ENCODE measurements at regions of chr5 and their contacts with region 1.

Region 1: DNA sequence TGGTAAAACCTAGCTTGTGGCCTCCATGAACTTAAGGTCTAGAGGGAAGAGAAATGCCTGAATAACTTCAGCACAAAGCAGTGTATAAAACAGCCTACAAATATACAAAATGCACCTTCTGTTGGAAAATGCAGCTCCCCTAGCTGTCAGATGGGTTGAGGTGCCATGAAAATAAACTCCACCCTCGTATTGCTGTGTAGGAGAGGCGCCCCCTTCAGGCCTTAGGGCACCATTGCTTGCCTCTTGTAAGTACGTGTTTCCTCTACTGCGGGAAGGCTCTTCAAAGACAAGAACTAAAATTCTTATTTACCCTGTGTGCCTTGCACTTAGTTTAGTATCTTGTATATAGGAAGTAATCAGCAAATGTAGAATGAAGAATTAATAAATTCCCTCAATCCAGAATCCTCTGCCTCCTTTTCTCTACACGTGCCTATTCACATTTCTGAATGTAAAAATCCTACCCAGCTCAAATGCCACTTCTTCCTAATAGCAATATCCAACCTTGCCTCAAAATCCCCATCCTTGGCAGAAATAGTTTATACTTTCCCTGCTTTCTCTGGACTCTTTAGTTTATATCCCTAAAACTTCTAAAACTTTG is 393.7 kb upstream of the PDE4D start:
- DNase-seq: peak; percentile 75
- ATAC-seq: peak; percentile 99
- H3K4me3 ChIP-seq: no peak overlapping the region
- H3K27ac ChIP-seq: no peak overlapping the region
- H3K4me1 ChIP-seq: no peaks in the 10 kb centered on the region
- H3K27me3 ChIP-seq: peaks cover 28% of the 10 kb centered on the region
- CTCF ChIP-seq: peak; percentile 88 to 99 (median 97)
- POLR2A ChIP-seq: no peak
- RAD21 ChIP-seq: peak; percentile 65

Region 2: DNA sequence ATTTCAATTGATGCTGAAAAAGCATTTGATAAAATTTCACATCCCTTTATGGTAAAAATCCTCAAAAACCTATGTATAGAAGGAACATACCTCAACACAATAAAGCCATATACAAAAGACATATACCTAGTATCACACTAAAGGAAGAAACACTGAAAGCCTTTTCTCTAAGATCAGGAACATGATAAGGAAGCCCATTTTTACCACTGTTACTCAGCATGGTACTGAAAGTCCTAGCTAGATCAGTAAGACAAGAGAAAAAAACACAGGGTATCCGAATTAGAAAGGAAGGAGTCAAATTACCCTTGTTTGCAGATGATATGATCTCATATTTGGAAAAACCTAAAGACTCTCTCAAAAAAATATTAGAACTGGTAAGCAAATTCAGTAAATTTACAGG is 43.6 kb before region 1 on chr5:
- CTCF ChIA-PET with region 1: no interaction called
- POLR2A ChIA-PET with region 1: no interaction called
- RAD21 ChIA-PET with region 1: no interaction called
- intact Hi-C with region 1: no loop called
- DNase-seq: no peak
- ATAC-seq: no peak
- H3K4me3 ChIP-seq: no peak overlapping the region
- H3K27ac ChIP-seq: no peak overlapping the region
- H3K4me1 ChIP-seq: no peaks in the 10 kb centered on the region
- H3K27me3 ChIP-seq: no peaks in the 10 kb centered on the region
- CTCF ChIP-seq: no peak
- POLR2A ChIP-seq: no peak
- RAD21 ChIP-seq: no peak

Region 3: GRCh38 chr5:60340965-60341471 is 53.7 kb after region 1 on chr5:
- CTCF ChIA-PET with region 1: no interaction called
- POLR2A ChIA-PET with region 1: no interaction called
- RAD21 ChIA-PET with region 1: no interaction called
- intact Hi-C with region 1: no loop called
- DNase-seq: no peak
- ATAC-seq: no peak
- H3K4me3 ChIP-seq: no peak overlapping the region
- H3K27ac ChIP-seq: no peak overlapping the region
- H3K4me1 ChIP-seq: no peaks in the 10 kb centered on the region
- H3K27me3 ChIP-seq: 0 out of 2 replicates have a peak, but pooled peaks cover 5% of the 10 kb centered on the region
- CTCF ChIP-seq: no peak
- POLR2A ChIP-seq: no peak
- RAD21 ChIP-seq: no peak

Region 4: DNA sequence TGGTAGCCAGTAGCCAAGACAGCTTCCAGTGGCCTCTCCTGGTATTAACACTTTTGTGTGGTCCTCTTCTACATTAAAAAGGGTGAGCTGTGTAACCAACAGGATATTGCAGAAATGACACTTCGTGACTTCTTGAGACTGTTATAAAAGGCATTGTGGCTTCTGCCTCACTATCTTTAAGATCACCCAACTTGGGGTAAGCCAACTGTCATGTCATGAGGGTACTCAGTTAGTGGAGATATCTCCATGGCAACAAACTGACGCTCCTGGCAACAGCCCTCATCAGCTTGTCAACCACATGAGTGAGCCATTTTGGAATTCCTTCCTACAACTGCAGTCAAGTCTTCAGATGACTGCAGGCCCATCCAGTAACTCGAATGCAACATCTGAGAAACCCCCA is 291.0 kb after region 1 on chr5:
- CTCF ChIA-PET with region 1: no interaction called
- POLR2A ChIA-PET with region 1: no interaction called
- RAD21 ChIA-PET with region 1: no interaction called
- intact Hi-C with region 1: no loop called
- DNase-seq: no peak
- ATAC-seq: no peak
- H3K4me3 ChIP-seq: no peak overlapping the region
- H3K27ac ChIP-seq: no peak overlapping the region
- H3K4me1 ChIP-seq: no peaks in the 10 kb centered on the region
- H3K27me3 ChIP-seq: no peaks in the 10 kb centered on the region
- CTCF ChIP-seq: no peak
- POLR2A ChIP-seq: no peak
- RAD21 ChIP-seq: no peak

Region 5: DNA sequence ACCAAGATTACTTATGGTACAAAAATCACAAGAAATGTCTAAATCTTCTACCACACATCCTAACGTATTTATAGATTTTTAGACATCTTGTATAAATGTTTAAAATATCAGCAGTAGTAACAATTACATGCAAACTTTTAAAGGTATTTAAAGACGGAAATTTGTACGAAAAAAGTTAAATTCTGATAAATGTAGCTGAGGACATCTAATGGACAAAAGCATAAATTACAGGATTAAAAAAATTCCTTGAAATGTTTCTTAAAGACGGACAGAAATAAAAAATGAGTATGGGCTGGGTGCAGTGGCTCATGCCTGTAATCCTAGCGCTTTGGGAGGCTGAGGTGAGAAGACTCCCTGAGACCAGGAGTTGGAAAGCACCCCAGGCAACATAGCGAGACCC is 641.8 kb after region 1 on chr5:
- CTCF ChIA-PET with region 1: no interaction called
- POLR2A ChIA-PET with region 1: no interaction called
- RAD21 ChIA-PET with region 1: no interaction called
- intact Hi-C with region 1: loop called (anchors 10 kb)
- DNase-seq: no peak
- ATAC-seq: no peak
- H3K4me3 ChIP-seq: no peak overlapping the region
- H3K27ac ChIP-seq: no peak overlapping the region
- H3K4me1 ChIP-seq: no peaks in the 10 kb centered on the region
- H3K27me3 ChIP-seq: no peaks in the 10 kb centered on the region
- CTCF ChIP-seq: peak in 2 of 3 experiments; percentile 28 to 49; a peak in 3 of 6 replicates
- POLR2A ChIP-seq: no peak
- RAD21 ChIP-seq: peak; percentile 52